Gastrocnemius medialis (tissue), 4 donors: ENCODE measurements at regions of chr3 and their contacts with region 1.

Region 1: DNA sequence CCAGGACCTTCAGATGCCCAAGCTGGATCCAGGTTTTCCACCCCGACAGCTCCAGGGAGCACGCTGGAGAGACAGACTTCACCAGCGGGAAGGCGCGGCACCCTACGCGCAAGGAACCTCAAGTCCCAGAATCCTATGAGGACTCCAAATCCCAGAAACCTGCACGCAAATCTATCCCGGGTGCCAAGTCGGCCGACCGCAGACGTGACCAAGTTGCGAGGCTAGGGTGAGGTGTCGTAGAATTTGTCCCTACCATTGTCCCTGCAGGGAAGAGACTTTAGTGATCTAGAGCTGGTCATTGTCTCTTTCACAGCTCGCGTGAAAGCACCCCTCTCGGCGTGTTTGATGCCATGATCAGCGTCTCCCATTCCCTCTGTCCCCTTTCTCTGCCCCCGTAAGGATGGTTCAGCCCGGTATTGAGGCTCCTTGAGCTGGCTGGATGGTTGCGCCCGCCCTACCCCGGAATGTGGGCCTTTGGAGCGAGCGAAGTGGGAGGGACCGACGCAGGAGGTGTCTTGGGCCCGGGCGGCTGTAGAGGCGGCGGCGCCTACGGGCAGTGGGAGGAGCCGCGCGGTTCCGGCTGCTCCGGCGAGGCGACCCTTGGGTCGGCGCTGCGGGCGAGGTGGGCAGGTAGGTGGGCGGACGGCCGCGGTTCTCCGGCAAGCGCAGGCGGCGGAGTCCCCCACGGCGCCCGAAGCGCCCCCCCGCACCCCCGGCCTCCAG is at the start of gene PRKCI:
- DNase-seq: peak; percentile 93 to 95
- ATAC-seq: peak; percentile 96 to 97
- H3K4me3 ChIP-seq: peak within 1 kb of the TSS; percentile 78 to 98 (median 86)
- H3K27ac ChIP-seq: peak within 1 kb of the TSS; percentile 75 to 86 (median 84)
- H3K4me1 ChIP-seq: peaks cover 6 to 10% of the 10 kb centered on the region in 2 donors
- H3K27me3 ChIP-seq: no peaks in the 10 kb centered on the region
- CTCF ChIP-seq: no peak
- POLR2A ChIP-seq: peak; percentile 81 to 83
- total RNA-seq, gene PRKCI: 10.5 to 20.9 (median 14.0) TPM

Region 2: GRCh38 chr3:170357176-170357919 is 135.3 kb after region 1 on chr3 and contains the start of gene SKIL:
- in situ Hi-C with region 1: no loop called
- intact Hi-C with region 1: loop called (anchors 2 kb)
- DNase-seq: peak; percentile 95 to 97
- ATAC-seq: peak; percentile 77 to 83
- H3K4me3 ChIP-seq: peak within 1 kb of the TSS; percentile 86 to 93 (median 92)
- H3K27ac ChIP-seq: peak within 1 kb of the TSS; percentile 98 to 99 (median 99)
- H3K4me1 ChIP-seq: peaks cover 30 to 47% of the 10 kb centered on the region in 2 donors
- H3K27me3 ChIP-seq: no peaks in the 10 kb centered on the region
- CTCF ChIP-seq: peak in 2 of 5 experiments; percentile 3 to 11
- POLR2A ChIP-seq: peak; percentile 92 to 93
- total RNA-seq, gene SKIL: 26.7 to 45.1 (median 29.4) TPM